ENCODE measurements at regions of chr2 and their contacts with region 1.

Region 1: GRCh38 chr2:153532140-153532539 is 53.6 kb upstream of the RPRM start:
- DNase-seq: no peak
- H3K4me3 ChIP-seq: no peak overlapping the region
- H3K27me3 ChIP-seq: no peaks in the 10 kb centered on the region
- CTCF ChIP-seq: no peak

Region 2: GRCh38 chr2:153360239-153360638 is 171.9 kb before region 1 on chr2:
- CTCF ChIA-PET with region 1: no interaction called
- POLR2A ChIA-PET with region 1: no interaction called
- DNase-seq: no peak
- H3K4me3 ChIP-seq: no peak overlapping the region
- H3K27me3 ChIP-seq: no peaks in the 10 kb centered on the region
- CTCF ChIP-seq: no peak

Region 3: GRCh38 chr2:153519257-153519875 is 12.8 kb before region 1 on chr2:
- CTCF ChIA-PET with region 1: interaction called, 10 read pairs
- POLR2A ChIA-PET with region 1: no interaction called
- DNase-seq: no peak
- H3K4me3 ChIP-seq: no peak overlapping the region
- H3K27me3 ChIP-seq: no peaks in the 10 kb centered on the region
- CTCF ChIP-seq: peak; percentile 71

Measured in BJ (cell line).